ENCODE measurements at regions of chrX and their contacts with region 1.

Region 1: GRCh38 chrX:145936769-145937168 is 119.1 kb downstream of the SLITRK2 start:
- DNase-seq: no peak
- ATAC-seq: no peak
- H3K4me3 ChIP-seq: no peak overlapping the region
- H3K27ac ChIP-seq: no peak overlapping the region
- H3K4me1 ChIP-seq: no peaks in the 10 kb centered on the region
- H3K27me3 ChIP-seq: no peaks in the 10 kb centered on the region
- CTCF ChIP-seq: no peak

Region 2: DNA sequence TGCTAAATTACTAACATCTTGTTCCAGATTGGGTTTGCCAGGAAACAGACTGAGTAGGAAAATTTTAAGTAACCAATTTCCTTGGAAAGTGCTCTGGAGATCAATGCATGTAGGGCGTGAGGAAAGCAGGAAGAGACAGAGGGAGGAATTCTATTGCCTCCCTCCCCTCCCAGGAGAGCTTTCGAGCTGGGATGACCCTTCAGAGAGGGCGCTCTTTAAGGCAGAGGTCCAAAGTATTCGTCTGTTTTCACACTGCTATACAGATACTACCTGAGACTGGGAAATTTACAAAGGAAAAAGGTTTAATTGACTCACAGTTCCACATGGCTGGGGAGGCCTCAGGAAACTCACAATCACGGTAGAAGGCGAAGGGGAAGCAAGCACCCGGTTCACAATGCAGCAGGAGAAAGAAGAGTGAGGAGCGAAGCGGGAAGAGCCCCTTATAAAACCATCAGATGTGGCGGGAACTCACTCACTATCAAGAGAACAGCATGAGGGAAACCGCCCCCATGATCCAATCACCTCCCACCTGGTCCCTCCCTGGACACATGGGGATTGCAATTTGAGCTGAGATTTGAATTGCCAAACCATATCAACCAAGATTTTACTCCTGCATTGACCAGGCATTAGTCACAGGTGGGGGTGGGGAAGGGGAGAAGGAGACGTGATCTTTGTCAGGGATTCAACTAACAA is 55.4 kb before region 1 on chrX:
- intact Hi-C with region 1: loop called in 1 of 10 experiments (anchors 2 kb)
- DNase-seq: no peak
- ATAC-seq: no peak
- H3K4me3 ChIP-seq: no peak overlapping the region
- H3K27ac ChIP-seq: no peak overlapping the region
- H3K4me1 ChIP-seq: no peaks in the 10 kb centered on the region
- H3K27me3 ChIP-seq: no peaks in the 10 kb centered on the region
- CTCF ChIP-seq: no peak

Measured in heart right ventricle (tissue), 16 donors.